PC-3 (cell line): ENCODE measurements at regions of chr20 and their contacts with region 1.

Region 1: GRCh38 chr20:47785854-47786764 is 828 bp upstream of the SULF2 start:
- DNase-seq: peak; percentile 90
- ATAC-seq: peak; percentile 35
- H3K4me3 ChIP-seq: peak overlapping the region; percentile 83
- H3K27ac ChIP-seq: peak overlapping the region; percentile 87
- H3K4me1 ChIP-seq: peaks cover 66% of the 10 kb centered on the region
- H3K27me3 ChIP-seq: no peaks in the 10 kb centered on the region
- CTCF ChIP-seq: peak; percentile 96

Region 2: DNA sequence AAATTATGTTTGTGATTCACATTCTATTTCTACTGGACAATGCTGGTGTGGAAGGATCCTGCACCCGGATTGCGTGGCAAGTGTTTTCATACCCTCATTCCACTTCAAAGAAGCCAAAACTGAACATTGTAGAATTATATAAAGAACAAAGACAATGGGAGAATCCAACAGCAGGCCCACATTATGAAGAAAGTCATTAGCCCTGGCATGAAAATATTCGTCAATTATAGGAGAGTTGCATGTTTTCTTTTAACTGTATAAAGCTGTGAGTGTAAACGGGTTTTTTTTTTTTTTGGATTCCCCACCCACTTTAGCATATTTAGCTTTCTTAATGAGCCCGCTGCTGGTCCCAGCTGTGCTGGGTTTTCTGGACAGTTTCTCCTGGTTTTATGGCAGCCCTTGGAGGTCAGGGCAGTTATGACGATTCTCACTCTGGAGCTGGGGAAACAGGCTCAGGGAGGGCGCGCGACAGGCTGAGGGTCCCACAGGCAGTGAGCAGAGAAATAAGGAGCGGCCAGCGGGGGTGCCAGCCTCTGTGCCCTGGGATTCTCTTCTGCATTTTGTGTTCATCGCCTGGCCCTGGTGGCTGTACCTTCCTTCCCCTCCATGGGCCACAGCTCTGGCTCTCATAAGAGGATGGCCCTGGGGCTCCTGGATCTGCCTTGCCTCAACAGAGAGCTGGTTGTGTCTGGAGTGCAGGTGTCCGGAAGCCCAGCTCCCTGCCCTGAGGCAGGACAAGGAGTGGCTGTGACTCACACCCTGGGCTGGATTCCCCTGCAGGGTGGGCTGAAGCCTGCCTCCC is 23.2 kb after region 1 on chr20:
- CTCF ChIA-PET with region 1: no interaction called
- POLR2A ChIA-PET with region 1: interaction called, 15 read pairs
- intact Hi-C with region 1: no loop called
- DNase-seq: peak; percentile 99
- ATAC-seq: peak; percentile 92
- H3K4me3 ChIP-seq: no peak overlapping the region
- H3K27ac ChIP-seq: peak overlapping the region; percentile 97
- H3K4me1 ChIP-seq: peaks cover 42% of the 10 kb centered on the region
- H3K27me3 ChIP-seq: no peaks in the 10 kb centered on the region
- CTCF ChIP-seq: no peak

Region 3: DNA sequence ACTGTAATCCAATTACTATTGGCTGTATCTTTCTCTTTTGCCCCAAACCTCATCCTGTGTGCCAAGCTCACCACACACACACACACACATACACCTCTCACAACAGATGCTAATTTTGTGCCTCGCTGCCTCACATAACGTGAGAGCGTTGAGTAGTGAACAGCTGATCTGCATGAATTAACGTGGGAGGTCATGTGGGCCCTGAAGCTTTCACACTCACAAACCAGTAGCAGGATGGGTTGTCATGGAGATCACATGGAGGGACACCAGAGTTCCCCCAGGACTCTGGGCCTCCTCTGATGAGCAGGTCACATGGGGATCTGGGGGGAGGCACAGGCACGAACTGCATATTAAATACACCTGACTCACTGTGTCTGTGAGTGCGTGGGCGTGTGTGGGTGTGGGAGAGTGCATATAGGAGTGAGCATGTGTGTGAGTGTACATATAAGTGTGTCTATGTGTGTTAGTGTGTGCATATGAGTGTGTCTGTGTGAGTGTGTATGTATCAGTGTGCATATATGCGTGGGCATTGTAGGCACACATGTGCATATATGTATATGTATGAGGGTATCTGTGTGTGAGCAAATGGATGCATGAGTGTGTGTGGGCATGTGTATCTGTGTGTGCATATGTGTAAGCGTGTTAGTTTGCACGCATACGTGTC is 61.9 kb after region 1 on chr20:
- CTCF ChIA-PET with region 1: interaction called, 3 read pairs
- POLR2A ChIA-PET with region 1: interaction called, 5 read pairs
- intact Hi-C with region 1: loop called (anchors 2 kb)
- DNase-seq: peak; percentile 38
- ATAC-seq: peak; percentile 10
- H3K4me3 ChIP-seq: no peak overlapping the region
- H3K27ac ChIP-seq: peak overlapping the region; percentile 83
- H3K4me1 ChIP-seq: peaks cover 50% of the 10 kb centered on the region
- H3K27me3 ChIP-seq: no peaks in the 10 kb centered on the region
- CTCF ChIP-seq: no peak

Region 4: DNA sequence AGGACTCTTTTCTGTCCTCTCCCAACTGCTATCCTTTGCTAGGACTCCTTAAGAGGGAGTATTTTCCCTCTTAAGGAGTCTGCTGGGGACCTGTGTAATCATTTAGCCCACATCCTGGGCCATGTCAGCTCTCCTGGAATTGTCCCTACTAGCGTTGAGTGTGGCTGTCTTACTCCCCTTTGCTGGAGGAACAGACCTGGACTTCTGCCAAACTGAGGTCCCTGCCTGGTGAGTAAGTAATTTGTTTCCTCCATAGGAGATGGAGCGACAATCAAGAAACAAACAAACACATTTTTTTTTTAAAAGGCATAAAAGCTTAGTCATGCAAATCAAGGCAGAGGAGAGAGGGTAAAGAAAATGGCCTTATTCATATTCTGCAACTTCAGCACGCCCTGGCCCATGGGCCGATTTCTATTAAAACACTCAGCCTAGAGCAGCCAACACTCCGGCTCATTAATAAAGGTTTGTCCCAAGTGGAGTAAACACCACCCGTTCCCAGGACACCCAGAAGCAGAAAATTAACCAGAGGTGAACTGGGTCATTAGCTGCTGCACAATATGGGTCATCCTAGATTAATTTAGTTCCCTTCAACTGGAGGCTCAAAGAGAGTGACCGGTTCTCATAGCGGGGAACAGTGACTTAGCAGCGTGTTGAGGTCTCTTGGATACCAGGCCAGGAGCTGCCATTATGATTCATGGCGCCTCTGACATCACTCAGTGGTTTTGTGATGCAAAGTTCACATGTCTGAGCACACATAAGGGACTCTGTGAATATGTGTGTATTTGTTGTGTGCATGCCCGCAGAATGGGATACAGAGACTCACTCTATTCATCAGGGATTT is 164.2 kb after region 1 on chr20:
- CTCF ChIA-PET with region 1: interaction called, 5 read pairs
- POLR2A ChIA-PET with region 1: no interaction called
- intact Hi-C with region 1: loop called (anchors 2 kb)
- DNase-seq: peak; percentile 97
- ATAC-seq: peak; percentile 75
- H3K4me3 ChIP-seq: no peak overlapping the region
- H3K27ac ChIP-seq: peak overlapping the region; percentile 93
- H3K4me1 ChIP-seq: peaks cover 43% of the 10 kb centered on the region
- H3K27me3 ChIP-seq: no peaks in the 10 kb centered on the region
- CTCF ChIP-seq: peak; percentile 45; the same call in 1 of the 2 replicates

Region 5: GRCh38 chr20:48188657-48189551 is 402.8 kb after region 1 on chr20:
- CTCF ChIA-PET with region 1: no interaction called
- POLR2A ChIA-PET with region 1: interaction called, 3 read pairs
- intact Hi-C with region 1: loop called (anchors 1 kb)
- DNase-seq: peak; percentile 63
- ATAC-seq: peak; percentile 93
- H3K4me3 ChIP-seq: no peak overlapping the region
- H3K27ac ChIP-seq: no peak overlapping the region
- H3K4me1 ChIP-seq: 0 out of 2 replicates have a peak, but pooled peaks cover 7% of the 10 kb centered on the region
- H3K27me3 ChIP-seq: no peaks in the 10 kb centered on the region
- CTCF ChIP-seq: peak; percentile 90